Mammary epithelial cell (primary cell): ENCODE measurements at regions of chr16 and their contacts with region 1.

Region 1: DNA sequence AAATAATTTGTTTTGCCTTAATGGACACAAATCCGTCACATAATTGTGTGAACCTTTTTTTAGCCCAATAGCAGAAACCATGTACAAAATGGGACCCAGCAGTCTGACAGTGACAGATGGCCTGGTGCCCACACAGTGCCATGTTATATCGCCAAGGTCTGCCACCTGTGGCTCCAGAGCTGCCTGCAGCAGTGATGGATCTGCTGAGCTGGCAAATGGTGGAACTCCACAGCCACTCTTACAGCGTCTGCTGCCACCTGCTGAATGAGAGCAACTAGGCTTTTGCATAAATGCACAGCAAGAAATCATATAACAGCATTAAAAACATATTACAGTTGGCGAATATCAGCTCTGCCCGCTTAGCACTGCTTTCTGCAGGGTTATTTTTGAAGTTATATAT is 59.4 kb downstream of the NUP93 start:
- DNase-seq: peak; percentile 45
- H3K4me3 ChIP-seq: no peak overlapping the region
- H3K27ac ChIP-seq: no peak overlapping the region
- H3K4me1 ChIP-seq: no peaks in the 10 kb centered on the region
- H3K27me3 ChIP-seq: no peaks in the 10 kb centered on the region
- CTCF ChIP-seq: peak; percentile 54 to 72

Region 2: DNA sequence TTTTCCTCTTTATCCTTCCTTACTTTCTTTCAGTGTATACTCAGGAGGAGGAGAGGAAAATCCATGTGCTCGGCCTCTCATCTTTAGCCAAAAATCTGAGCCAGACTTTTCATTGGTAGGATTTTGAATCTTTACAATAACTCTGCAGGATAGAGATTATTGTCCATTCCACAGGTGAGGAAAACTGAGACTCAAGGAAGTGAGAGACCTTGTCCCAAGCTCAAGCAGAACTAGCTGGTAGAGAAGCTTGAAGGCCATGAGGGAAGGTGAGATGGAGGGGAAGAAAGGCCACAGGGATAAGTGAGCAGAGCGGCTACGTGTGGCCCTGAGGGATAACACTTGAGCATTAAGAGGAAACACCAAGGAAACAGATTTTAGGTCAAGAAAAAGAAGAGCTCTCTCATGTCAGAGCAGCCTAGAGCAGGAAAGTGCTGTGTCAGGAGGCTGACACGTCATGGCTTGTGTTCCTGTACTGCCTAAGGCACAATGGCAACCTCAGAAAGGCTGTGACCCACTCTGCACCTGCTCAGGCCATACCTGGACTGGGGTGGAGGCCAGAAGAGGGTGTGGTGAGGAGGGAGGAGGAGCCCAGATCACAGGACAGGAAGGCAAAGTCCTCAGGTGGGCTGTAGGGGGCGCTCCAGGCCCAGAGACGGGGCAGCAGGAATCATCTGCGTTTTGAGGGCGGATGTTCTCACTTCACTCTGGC is 212.6 kb before region 1 on chr16:
- CTCF ChIA-PET with region 1: interaction called, 6 read pairs
- dilution Hi-C with region 1: no loop called
- in situ Hi-C with region 1: no loop called
- intact Hi-C with region 1: loop called (anchors 1 kb)
- DNase-seq: peak; percentile 91
- H3K4me3 ChIP-seq: no peak overlapping the region
- H3K27ac ChIP-seq: no peak overlapping the region
- H3K4me1 ChIP-seq: peaks cover 4% of the 10 kb centered on the region
- H3K27me3 ChIP-seq: no peaks in the 10 kb centered on the region
- CTCF ChIP-seq: peak; percentile 96 to 97

Region 3: DNA sequence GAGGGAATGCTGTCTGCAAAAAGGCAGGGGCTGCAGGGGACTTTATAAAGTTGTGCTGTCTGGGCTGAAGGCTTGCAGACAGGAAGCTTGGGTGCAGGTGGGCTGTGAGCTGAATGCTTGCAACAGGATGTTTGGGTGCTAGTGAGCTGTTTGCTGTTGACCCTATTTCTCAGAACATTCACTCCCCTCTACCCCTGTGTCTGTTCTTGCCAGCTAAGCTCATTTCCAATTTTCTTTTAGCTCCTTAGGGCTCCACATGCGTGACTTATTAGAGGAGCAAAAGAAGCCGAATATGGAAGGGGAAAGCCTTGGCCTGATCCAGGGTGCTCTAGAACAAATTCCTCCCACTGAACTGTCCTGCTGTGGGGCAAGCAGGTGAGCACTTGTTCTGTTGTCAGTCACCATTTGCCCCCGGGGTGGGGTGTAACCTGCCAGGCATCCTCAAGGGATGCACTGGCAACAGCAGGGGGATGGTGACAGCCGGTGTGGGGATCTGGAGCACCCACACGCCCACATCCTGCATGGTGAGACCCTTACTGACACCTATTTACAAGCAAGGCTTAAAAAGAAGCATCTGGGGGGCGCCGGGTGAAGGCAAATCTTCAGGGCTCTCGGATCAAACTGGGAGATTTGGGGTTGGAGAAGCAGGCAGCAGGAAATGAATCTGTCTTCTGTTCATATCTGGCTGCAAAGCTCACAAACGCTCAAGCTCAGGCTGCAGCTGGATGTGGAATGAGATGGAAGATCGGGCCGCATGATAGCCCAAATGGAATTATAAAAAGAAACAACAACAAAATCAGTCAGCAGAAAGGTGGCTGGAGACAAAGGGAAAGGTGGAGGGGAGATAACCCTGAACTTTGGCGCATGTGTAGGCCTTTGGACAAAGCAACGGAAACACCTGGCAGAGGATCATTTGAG is 80.6 kb before region 1 on chr16:
- CTCF ChIA-PET with region 1: interaction called, 15 read pairs
- dilution Hi-C with region 1: no loop called
- in situ Hi-C with region 1: no loop called
- intact Hi-C with region 1: no loop called
- DNase-seq: no peak
- H3K4me3 ChIP-seq: no peak overlapping the region
- H3K27ac ChIP-seq: no peak overlapping the region
- H3K4me1 ChIP-seq: peaks cover 3% of the 10 kb centered on the region
- H3K27me3 ChIP-seq: no peaks in the 10 kb centered on the region
- CTCF ChIP-seq: no peak

Region 4: DNA sequence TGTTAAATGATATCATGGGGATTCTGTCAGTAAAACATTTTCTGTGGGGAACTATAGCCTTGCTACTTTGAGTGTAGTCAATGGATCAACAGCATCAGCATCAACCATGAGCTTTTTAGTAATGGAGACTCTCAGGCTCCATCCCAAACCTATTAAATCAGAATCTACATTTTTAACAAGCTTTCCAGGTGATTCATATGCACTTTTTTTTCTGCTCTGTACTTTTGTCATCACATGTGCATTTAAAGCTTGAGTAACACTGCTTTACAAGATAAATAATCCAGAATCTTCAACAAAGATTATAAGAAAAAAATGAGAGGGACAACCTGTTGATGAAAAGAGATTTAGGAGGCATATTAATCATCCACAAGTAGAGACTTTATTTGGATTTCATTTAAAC is 36.0 kb before region 1 on chr16:
- CTCF ChIA-PET with region 1: no interaction called
- dilution Hi-C with region 1: no loop called
- in situ Hi-C with region 1: no loop called
- intact Hi-C with region 1: no loop called
- DNase-seq: peak; percentile 38
- H3K4me3 ChIP-seq: no peak overlapping the region
- H3K27ac ChIP-seq: no peak overlapping the region
- H3K4me1 ChIP-seq: no peaks in the 10 kb centered on the region
- H3K27me3 ChIP-seq: no peaks in the 10 kb centered on the region
- CTCF ChIP-seq: no peak

Region 5: DNA sequence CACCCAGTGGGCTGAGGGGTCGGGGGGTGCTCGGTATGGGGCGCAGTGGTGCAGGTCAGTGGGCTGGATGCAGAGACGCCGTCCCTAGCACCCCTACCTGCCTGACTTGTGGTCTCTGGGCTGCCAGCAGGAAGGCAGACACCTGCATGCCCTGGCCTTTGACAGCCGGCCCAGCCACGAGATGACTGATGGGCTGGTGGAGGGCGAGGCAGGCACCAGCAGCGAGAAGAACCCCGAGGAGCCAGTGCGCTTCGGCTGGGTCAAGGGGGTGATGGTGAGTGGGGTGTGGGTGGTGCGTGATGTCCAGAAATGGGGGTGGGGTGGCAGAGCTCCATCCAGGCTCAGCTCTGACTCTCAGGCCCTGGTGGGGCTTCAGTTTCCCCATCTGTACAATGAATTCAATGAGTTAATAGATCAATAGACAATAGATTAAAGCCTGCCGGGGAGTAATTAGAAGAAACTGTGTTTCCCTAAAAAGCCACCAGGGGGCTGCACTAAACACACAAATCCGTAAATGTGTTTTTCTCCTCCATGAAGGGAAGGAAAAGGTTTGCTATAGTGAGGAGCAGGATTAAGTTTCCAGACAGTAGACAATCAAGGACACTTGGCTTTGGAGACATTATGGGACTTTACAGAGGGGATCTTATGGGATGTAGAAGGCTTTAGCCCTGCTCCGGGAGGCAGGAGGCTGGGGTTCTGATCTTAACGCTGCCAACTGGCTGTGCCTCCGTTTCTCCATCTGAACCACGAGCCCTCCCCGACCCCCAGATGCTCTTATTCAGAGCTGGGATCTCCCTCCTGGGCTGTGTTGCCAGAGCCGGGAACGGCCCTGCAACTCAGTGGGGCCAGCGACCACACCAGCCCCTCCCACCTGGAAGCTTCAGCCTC is 77.8 kb after region 1 on chr16:
- CTCF ChIA-PET with region 1: interaction called, 6 read pairs
- dilution Hi-C with region 1: no loop called
- in situ Hi-C with region 1: no loop called
- intact Hi-C with region 1: loop called (anchors 1 kb)
- DNase-seq: peak; percentile 19
- H3K4me3 ChIP-seq: no peak overlapping the region
- H3K27ac ChIP-seq: no peak overlapping the region
- H3K4me1 ChIP-seq: no peaks in the 10 kb centered on the region
- H3K27me3 ChIP-seq: no peaks in the 10 kb centered on the region
- CTCF ChIP-seq: peak; percentile 63 to 72

Region 6: GRCh38 chr16:56950881-56951771 is 161.8 kb after region 1 on chr16:
- CTCF ChIA-PET with region 1: no interaction called
- dilution Hi-C with region 1: no loop called
- in situ Hi-C with region 1: no loop called
- intact Hi-C with region 1: loop called (anchors 1 kb)
- DNase-seq: peak; percentile 16
- H3K4me3 ChIP-seq: no peak overlapping the region
- H3K27ac ChIP-seq: no peak overlapping the region
- H3K4me1 ChIP-seq: no peaks in the 10 kb centered on the region
- H3K27me3 ChIP-seq: no peaks in the 10 kb centered on the region
- CTCF ChIP-seq: peak; percentile 55 to 76